CD4-positive, alpha-beta memory T cell (primary cell): ENCODE measurements at regions of chr5 and their contacts with region 1.

Region 1: DNA sequence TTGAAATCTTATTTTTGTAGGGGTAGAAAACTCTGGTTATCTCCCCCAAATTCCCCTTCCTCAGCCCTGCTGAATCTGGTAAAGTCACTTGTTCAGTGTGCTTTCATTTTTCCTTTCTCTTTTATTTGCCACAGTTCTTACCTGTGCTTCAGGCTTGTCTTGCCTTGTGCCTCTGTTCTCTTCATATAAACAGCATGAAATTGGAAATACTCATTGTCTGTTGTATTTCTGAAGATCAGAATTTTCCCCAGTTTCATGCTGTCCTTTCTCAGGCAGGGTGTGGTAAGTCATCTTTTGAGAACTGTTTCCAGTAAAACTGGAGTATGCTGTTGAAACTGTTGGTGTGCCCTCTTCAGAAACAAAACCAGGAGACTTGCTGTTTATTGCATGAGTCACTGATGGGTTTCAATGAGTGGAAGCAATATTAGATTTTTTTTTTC is 7.0 kb downstream of the PAM start:
- DNase-seq: no peak
- H3K4me3 ChIP-seq: peak overlapping the region in 1 of 2 donors; percentile 3
- H3K4me3 Mint-ChIP-seq: peak overlapping the region; percentile 64 to 86 (median 78)
- H3K27ac ChIP-seq: peak overlapping the region; percentile 47
- H3K27ac Mint-ChIP-seq: peak overlapping the region; percentile 45 to 87 (median 58)
- H3K4me1 ChIP-seq: peaks cover 65% of the 10 kb centered on the region
- H3K4me1 Mint-ChIP-seq: peaks cover 62 to 76% (median 71%) of the 10 kb centered on the region in 4 donors
- H3K27me3 ChIP-seq: no peaks in the 10 kb centered on the region
- H3K27me3 Mint-ChIP-seq: no peaks in the 10 kb centered on the region

Region 2: GRCh38 chr5:102747386-102748166 is 14.5 kb before region 1 on chr5:
- CTCF ChIA-PET with region 1: interaction called, 3 read pairs
- POLR2A ChIA-PET with region 1: no interaction called
- intact Hi-C with region 1: loop called (anchors 2 kb)
- DNase-seq: no peak
- H3K4me3 ChIP-seq: no peak overlapping the region
- H3K4me3 Mint-ChIP-seq: no peak overlapping the region
- H3K27ac ChIP-seq: no peak overlapping the region
- H3K27ac Mint-ChIP-seq: no peak overlapping the region
- H3K4me1 ChIP-seq: no peaks in the 10 kb centered on the region
- H3K4me1 Mint-ChIP-seq: no peaks in the 10 kb centered on the region
- H3K27me3 ChIP-seq: no peaks in the 10 kb centered on the region
- H3K27me3 Mint-ChIP-seq: peaks cover 0 to 3% of the 10 kb centered on the region in 2 donors

Region 3: DNA sequence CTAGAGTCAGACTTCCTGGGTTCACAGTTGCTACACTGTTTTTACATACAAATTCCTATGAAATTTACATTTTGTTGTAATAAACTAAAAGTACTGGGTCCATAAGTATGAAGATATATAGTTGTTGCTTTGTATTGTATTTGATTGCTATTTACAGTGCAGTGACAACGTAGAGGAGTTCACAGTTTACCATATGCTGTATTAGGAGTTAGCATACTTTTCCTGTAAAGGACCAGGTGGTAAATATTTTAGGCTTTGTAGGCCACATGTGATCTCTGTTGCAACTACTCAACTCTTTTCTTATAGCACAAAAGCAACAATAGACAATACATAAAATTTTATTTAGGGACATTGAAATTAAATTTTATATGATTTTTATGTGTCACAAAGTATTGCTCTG is 11.0 kb after region 1 on chr5:
- CTCF ChIA-PET with region 1: interaction called, 4 read pairs
- POLR2A ChIA-PET with region 1: interaction called, 6 read pairs
- intact Hi-C with region 1: loop called (anchors 1 kb)
- DNase-seq: no peak
- H3K4me3 ChIP-seq: no peak overlapping the region
- H3K4me3 Mint-ChIP-seq: no peak overlapping the region
- H3K27ac ChIP-seq: no peak overlapping the region
- H3K27ac Mint-ChIP-seq: no peak overlapping the region
- H3K4me1 ChIP-seq: peaks cover 21% of the 10 kb centered on the region
- H3K4me1 Mint-ChIP-seq: peaks cover 22 to 37% (median 30%) of the 10 kb centered on the region in 4 donors
- H3K27me3 ChIP-seq: no peaks in the 10 kb centered on the region
- H3K27me3 Mint-ChIP-seq: no peaks in the 10 kb centered on the region